HepG2 (cell line): ENCODE measurements at regions of chr6 and their contacts with region 1.

Region 1: GRCh38 chr6:26312501-26313390 is 52.3 kb upstream of the BTN3A2 start:
- DNase-seq: peak; percentile 92
- ATAC-seq: peak; percentile 77
- H3K4me3 ChIP-seq: peak overlapping the region; percentile 67 to 80 (median 67)
- H3K27ac ChIP-seq: peak overlapping the region; percentile 55
- H3K4me1 ChIP-seq: peaks cover 72% of the 10 kb centered on the region
- H3K27me3 ChIP-seq: no peaks in the 10 kb centered on the region
- CTCF ChIP-seq: no peak
- EP300 ChIP-seq: peak in 1 of 2 experiments; percentile 68; a peak in 2 of 4 replicates
- POLR2A ChIP-seq: no peak
- RAD21 ChIP-seq: no peak

Region 2: DNA sequence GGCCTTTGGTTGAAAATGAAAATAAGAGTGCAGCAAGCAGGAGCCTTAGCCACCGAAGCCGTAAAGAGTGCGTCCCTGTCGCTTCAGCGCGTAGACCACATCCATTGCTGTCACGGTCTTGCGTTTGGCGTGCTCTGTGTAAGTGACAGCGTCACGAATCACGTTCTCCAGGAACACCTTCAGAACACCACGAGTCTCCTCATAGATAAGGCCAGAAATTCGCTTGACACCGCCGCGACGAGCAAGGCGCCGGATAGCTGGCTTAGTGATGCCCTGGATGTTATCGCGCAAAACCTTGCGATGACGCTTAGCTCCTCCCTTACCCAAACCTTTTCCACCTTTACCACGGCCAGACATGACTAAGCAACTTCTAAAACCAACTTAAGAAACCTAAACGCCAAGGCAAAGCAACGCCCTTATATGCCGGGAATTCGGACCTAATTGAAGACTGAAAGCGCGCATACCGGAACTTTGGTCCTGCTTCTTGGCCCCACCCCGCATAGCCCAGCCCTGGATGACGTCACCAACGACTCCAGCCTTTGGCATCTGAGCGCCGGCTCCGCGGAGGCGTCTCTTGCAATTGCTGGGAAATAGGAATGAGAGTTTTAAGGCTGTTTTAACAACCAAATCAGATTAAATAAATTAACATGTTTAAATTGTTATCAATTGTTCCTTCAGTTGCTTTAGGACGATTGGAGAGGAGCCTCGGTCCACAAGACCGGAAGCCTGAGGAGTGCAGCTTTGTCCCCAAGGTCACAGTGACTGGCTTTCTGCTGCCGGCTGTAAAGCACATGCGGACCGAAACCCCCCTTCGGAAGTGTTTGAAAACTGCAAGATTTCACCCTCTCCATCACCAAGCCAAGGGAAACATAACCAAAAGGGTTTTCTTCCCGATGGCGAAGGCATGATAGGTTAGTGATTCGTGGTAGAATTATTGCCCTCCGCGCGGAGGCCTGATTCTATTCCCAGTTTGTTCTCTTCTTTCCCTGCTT is 27.3 kb before region 1 on chr6:
- CTCF ChIA-PET with region 1: no interaction called
- POLR2A ChIA-PET with region 1: interaction called, 4 read pairs
- in situ Hi-C with region 1: no loop called
- intact Hi-C with region 1: loop called (anchors 1 kb)
- DNase-seq: peak; percentile 93
- ATAC-seq: peak; percentile 84
- H3K4me3 ChIP-seq: peak overlapping the region; percentile 76 to 89 (median 82)
- H3K27ac ChIP-seq: peak overlapping the region; percentile 85
- H3K4me1 ChIP-seq: peaks cover 19% of the 10 kb centered on the region
- H3K27me3 ChIP-seq: no peaks in the 10 kb centered on the region; a peak in 1 of 5 replicates
- CTCF ChIP-seq: peak; percentile 14; the same call in 1 of the 2 replicates
- EP300 ChIP-seq: peak; percentile 37 to 85; a peak in 3 of 4 replicates
- POLR2A ChIP-seq: peak; percentile 92 to 95
- RAD21 ChIP-seq: 0 out of 2 replicates have a peak, but pooled peaks have one; percentile 19

Region 3: DNA sequence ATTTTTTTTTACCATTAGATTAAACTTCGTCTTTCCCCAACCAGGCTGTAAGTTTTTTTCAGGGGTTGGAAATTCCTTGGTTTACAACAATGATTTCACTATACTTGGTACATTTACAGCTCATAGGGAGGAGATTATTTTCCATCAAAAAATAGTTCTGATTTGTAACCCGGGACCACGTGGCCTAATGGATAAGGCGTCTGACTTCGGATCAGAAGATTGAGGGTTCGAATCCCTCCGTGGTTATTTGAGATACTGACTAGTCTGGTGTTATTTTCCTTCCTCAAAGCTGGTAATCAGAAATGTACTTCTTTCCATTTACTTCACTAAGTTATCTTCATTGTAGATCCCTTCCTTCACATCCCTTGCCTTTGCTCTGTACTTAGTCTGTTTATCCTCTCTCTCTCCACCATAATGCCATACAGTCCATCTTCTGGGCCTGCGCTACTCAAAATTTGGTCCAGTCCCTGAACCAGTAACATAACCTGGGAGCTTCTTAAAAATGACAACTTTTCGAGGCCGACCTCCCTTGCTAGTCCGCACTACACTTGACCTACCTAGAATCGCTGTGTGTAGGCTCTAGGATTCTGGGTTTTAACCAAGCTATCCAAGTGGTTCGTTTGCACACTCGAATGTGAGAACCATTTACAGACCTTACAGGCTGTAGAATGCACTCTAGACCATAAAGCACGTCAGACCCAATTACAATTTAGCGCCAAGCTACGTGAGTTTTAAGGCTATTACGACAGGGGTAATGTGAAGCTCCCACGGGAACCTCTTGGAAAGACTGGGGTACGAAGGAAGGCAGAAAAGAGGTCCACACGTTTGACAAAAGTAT is 10.1 kb after region 1 on chr6:
- CTCF ChIA-PET with region 1: no interaction called
- POLR2A ChIA-PET with region 1: interaction called, 10 read pairs
- in situ Hi-C with region 1: no loop called
- intact Hi-C with region 1: loop called (anchors 1 kb)
- DNase-seq: peak; percentile 93
- ATAC-seq: peak; percentile 64
- H3K4me3 ChIP-seq: peak overlapping the region; percentile 61 to 89 (median 78)
- H3K27ac ChIP-seq: peak overlapping the region; percentile 76
- H3K4me1 ChIP-seq: peaks cover 65% of the 10 kb centered on the region
- H3K27me3 ChIP-seq: no peaks in the 10 kb centered on the region; a peak in 1 of 5 replicates
- CTCF ChIP-seq: no peak
- EP300 ChIP-seq: no peak
- POLR2A ChIP-seq: no peak
- RAD21 ChIP-seq: no peak

Region 4: GRCh38 chr6:26431258-26432172 is 118.8 kb after region 1 on chr6:
- CTCF ChIA-PET with region 1: no interaction called
- POLR2A ChIA-PET with region 1: no interaction called
- in situ Hi-C with region 1: no loop called
- intact Hi-C with region 1: no loop called
- DNase-seq: no peak
- ATAC-seq: no peak
- H3K4me3 ChIP-seq: no peak overlapping the region
- H3K27ac ChIP-seq: no peak overlapping the region
- H3K4me1 ChIP-seq: peaks cover 10% of the 10 kb centered on the region
- H3K27me3 ChIP-seq: no peaks in the 10 kb centered on the region
- CTCF ChIP-seq: no peak
- EP300 ChIP-seq: no peak
- POLR2A ChIP-seq: no peak
- RAD21 ChIP-seq: no peak